ENCODE measurements at regions of chr2 and their contacts with region 1.

Region 1: GRCh38 chr2:206392118-206392517 is 51.2 kb upstream of the ADAM23 start:
- DNase-seq: peak in 4 of 5 donors; percentile 11 to 23 (median 18)
- H3K4me3 ChIP-seq: no peak overlapping the region
- H3K4me3 Mint-ChIP-seq: no peak overlapping the region
- H3K27ac ChIP-seq: no peak overlapping the region
- H3K27ac Mint-ChIP-seq: no peak overlapping the region
- H3K4me1 ChIP-seq: no peaks in the 10 kb centered on the region
- H3K4me1 Mint-ChIP-seq: peaks cover 0 to 4% (median 0%) of the 10 kb centered on the region in 4 donors
- H3K27me3 ChIP-seq: no peaks in the 10 kb centered on the region
- H3K27me3 Mint-ChIP-seq: no peaks in the 10 kb centered on the region

Region 2: DNA sequence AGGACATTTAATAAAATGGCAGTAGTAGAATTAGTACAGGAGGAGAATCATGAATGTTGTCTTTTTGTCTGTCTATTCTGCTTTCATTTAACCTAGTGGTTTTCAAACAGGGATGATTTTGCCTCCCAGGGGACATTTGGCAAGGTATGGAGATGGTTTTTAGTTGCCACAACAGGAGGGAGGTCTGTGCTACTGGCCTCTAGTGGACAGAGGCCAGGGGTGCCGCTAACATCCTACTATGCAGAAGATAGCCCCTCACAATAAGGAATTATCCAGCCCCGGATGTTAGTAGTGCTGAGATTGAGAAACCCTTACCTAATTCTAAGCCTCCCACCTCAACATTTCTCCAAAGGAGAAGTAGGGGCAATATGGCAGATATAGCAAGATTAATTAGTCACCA is 391.6 kb after region 1 on chr2:
- CTCF ChIA-PET with region 1: interaction called, 14 read pairs
- POLR2A ChIA-PET with region 1: no interaction called
- intact Hi-C with region 1: no loop called
- DNase-seq: no peak
- H3K4me3 ChIP-seq: no peak overlapping the region
- H3K4me3 Mint-ChIP-seq: no peak overlapping the region
- H3K27ac ChIP-seq: no peak overlapping the region
- H3K27ac Mint-ChIP-seq: peak overlapping the region in 1 of 7 donors; percentile 17
- H3K4me1 ChIP-seq: no peaks in the 10 kb centered on the region
- H3K4me1 Mint-ChIP-seq: peaks cover 5 to 18% (median 15%) of the 10 kb centered on the region in 4 donors
- H3K27me3 ChIP-seq: no peaks in the 10 kb centered on the region
- H3K27me3 Mint-ChIP-seq: no peaks in the 10 kb centered on the region